Astrocyte of the cerebellum (primary cell): ENCODE measurements at regions of chr9 and their contacts with region 1.

Region 1: DNA sequence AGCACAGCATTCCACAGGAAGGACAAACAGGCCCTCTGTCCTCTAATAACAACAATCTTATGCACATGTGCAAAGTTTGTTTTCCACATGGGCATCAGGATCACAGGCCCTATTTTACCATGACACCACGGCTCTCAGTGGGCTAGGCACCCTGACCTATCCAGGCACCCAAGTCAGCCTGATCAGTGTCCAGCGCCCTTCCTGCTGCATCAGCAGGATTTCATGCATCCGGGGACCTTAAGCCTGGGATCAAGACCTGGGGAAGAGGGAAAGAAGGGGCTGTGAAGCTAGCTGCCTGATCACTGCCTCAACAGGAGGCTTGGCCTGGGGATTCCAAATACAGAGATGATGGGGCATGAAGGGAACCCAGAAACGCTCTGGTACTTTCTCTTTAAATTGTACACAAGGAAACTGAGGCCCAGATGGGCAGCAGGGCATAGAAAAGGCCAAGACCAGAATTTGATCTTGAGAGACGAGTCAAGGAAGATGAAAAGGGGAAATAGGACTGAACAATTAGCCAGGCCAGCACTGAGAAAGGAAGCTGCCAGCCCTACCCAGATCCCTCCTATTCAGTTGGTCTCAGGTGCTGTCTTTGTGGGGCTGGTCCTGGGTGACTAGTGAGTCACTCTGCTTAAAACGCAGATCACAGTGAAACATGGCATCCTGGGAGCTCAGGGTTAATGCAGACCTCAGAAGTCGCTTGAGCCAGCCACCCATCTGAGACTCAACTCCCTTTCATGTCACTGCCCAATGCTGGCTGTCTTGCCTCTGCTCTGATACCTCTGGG is 57.9 kb downstream of the SHB start:
- DNase-seq: no peak
- H3K4me3 ChIP-seq: no peak overlapping the region
- CTCF ChIP-seq: no peak

Region 2: GRCh38 chr9:37920471-37921167 is 90.5 kb before region 1 on chr9:
- in situ Hi-C with region 1: no loop called
- DNase-seq: no peak
- H3K4me3 ChIP-seq: no peak overlapping the region
- CTCF ChIP-seq: no peak

Region 3: DNA sequence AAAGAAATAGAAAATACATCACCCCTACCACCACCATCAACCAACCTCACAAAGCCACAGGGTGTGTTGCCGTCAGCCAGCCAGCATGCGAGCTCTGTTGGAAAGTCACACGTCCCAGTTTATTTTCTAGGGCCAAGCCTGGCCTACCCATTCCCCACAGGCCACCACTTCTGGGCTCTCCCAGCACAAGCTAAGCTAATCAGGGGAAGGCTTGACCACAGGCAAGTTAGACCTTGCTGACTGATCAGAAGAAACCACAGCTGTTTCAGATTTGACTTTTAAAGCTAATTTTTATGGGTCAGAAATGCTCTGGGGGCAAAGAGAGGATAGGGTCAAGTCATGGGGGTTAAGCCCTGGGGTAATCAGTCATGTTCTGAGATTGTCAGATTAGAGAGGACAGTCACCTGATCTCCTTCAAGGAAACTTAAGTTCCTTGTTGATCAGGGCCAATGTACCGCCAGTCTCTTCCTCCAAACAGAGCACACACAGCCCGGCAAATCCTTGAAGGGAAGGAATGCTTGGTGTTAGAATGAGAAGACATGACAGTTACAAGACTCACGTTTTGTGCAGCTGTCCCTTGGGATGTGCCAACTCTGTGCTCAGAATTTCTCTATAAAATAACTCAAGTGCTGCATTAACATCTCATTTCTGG is 50.3 kb after region 1 on chr9:
- in situ Hi-C with region 1: loop called (anchors 5 kb)
- DNase-seq: no peak
- H3K4me3 ChIP-seq: no peak overlapping the region
- CTCF ChIP-seq: no peak